WTC11 (cell line): ENCODE measurements at regions of chr10 and their contacts with region 1.

Region 1: DNA sequence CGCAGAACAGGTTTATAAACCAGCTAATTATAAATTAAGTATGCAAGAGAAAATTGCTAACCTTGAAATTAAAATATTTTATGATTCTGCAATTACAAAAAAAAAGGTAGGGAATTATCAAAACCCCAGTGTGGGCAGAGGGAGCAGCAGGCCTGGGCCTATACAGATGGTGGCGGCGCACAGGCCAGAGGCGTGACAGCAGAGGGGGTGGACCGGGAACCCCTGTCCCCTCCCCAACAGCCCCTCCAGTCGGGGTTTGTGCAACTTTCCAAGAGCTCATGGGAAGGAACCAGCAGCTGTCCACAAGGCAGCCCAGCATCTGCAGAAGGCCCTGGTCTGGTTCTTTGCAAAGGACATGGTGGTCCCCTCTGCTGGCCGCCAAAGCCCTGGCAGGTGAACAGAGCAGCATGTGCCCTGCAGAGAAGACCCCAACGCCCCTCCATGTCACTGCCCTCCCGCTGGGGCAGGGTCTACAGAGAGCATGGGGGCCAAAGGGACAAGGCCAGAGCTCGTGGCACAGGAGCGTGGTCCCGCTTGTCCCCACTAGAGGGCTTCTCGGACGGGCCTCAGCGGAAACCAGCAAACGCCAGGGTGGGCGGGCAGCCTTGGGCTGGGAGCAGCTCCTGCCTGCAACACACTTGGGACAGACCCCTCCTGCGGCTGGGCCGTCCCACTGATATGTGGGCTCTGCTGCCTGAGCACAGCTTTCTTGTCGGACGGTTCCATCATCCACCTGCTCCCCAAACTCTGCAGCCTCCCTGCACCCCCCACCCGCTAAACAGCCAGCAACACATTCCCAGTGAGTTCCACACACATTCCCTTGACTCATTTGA is 75.1 kb downstream of the EBF3 start:
- DNase-seq: peak; percentile 91
- ATAC-seq: peak; percentile 95
- H3K4me3 Mint-ChIP-seq: no peak overlapping the region
- H3K27ac Mint-ChIP-seq: no peak overlapping the region; the same call in 1 of the 2 replicates
- H3K4me1 Mint-ChIP-seq: peaks cover 47% of the 10 kb centered on the region
- H3K27me3 Mint-ChIP-seq: no peaks in the 10 kb centered on the region
- CTCF ChIP-seq: peak; percentile 83

Region 2: GRCh38 chr10:129718548-129719414 is 170.2 kb before region 1 on chr10:
- CTCF ChIA-PET with region 1: no interaction called
- POLR2A ChIA-PET with region 1: no interaction called
- DNase-seq: no peak
- ATAC-seq: no peak
- H3K4me3 Mint-ChIP-seq: no peak overlapping the region
- H3K27ac Mint-ChIP-seq: no peak overlapping the region; the same call in 1 of the 2 replicates
- H3K4me1 Mint-ChIP-seq: peaks cover 13% of the 10 kb centered on the region
- H3K27me3 Mint-ChIP-seq: no peaks in the 10 kb centered on the region
- CTCF ChIP-seq: no peak

Region 3: GRCh38 chr10:129742742-129743550 is 146.1 kb before region 1 on chr10:
- CTCF ChIA-PET with region 1: no interaction called
- POLR2A ChIA-PET with region 1: no interaction called
- DNase-seq: peak; percentile 6
- ATAC-seq: no peak
- H3K4me3 Mint-ChIP-seq: no peak overlapping the region
- H3K27ac Mint-ChIP-seq: no peak overlapping the region
- H3K4me1 Mint-ChIP-seq: 0 out of 2 replicates have a peak, but pooled peaks cover 2% of the 10 kb centered on the region
- H3K27me3 Mint-ChIP-seq: no peaks in the 10 kb centered on the region; the same call in 1 of the 2 replicates
- CTCF ChIP-seq: no peak

Region 4: DNA sequence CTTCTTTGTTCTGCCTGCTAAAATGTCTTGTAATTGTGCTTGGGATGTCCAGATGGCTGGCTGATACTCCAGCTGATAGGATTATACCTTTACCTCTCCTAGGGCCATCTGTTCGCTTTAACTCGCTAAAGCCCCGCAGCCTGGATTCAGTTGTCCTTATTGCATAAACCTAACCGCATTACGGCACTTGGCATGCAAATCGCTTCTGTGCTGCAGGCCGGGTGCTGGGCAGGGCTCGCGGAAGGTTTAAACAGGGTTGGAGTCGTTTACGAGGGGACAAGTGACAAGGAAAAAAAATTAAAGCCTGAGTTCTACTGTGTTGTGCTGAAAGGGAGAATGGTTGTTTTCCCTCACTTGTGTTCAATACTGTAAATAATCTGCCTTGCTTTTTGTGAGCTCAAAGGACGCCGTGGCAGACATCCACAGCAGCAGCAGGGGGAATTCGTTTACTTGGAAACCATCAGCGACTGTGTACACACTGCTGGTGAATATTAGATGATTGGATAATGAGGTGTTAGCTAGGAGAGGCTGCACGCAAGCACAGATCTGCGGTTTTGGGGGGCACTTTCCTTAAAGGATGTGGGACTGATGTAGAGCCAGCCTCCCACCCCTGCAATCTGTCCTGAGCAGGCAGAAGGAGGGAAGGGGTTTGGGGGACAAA is 17.9 kb before region 1 on chr10:
- CTCF ChIA-PET with region 1: interaction called, 79 read pairs
- POLR2A ChIA-PET with region 1: no interaction called
- DNase-seq: no peak
- ATAC-seq: no peak
- H3K4me3 Mint-ChIP-seq: no peak overlapping the region
- H3K27ac Mint-ChIP-seq: 0 out of 2 replicates have a peak overlapping the region, but pooled peaks have one; percentile 21
- H3K4me1 Mint-ChIP-seq: peaks cover 48% of the 10 kb centered on the region
- H3K27me3 Mint-ChIP-seq: no peaks in the 10 kb centered on the region
- CTCF ChIP-seq: no peak

Region 5: DNA sequence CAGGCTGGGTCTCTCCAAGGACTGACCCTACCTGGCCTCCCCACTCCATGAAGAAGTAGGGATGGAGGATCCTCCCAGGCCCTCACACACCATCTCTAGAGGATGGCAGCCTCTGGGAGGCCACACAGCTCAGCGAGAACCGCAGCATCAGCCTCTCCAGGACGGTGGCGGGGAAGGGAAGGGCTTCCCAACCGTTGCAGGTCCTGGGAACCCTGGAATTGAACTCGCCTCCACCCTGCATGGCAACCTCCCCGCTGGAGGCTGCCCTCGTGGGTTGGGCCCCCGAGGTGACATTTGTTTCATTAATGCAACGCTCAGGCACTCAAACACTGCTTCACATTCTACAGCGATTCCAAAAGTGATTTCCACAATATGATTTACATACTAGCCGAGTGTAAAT is 16.6 kb after region 1 on chr10:
- CTCF ChIA-PET with region 1: interaction called, 16 read pairs
- POLR2A ChIA-PET with region 1: no interaction called
- DNase-seq: no peak
- ATAC-seq: no peak
- H3K4me3 Mint-ChIP-seq: no peak overlapping the region
- H3K27ac Mint-ChIP-seq: no peak overlapping the region
- H3K4me1 Mint-ChIP-seq: peaks cover 20% of the 10 kb centered on the region
- H3K27me3 Mint-ChIP-seq: peaks cover 18% of the 10 kb centered on the region
- CTCF ChIP-seq: no peak

Region 6: DNA sequence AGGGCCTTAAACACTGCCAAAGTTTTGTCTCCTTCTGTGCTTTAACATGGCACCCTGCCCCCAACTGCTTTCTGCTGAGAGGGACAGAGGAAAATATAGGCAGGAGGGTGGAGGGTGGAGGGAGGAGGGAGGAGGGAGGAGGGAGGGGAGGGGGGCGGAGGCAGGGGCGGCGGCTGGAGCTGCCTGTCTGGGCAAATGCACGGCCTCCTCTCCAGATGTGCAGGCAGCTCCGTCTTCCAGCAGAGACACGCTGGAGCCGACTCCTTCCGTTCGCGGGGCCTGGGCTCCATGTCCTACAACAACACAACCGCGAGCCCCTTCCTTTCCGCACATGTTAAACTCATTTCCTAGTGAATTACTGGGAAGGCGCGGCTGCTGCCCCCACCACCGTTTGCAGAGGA is 60.9 kb after region 1 on chr10:
- CTCF ChIA-PET with region 1: interaction called, 19 read pairs
- POLR2A ChIA-PET with region 1: interaction called, 3 read pairs
- DNase-seq: peak; percentile 62
- ATAC-seq: peak; percentile 84
- H3K4me3 Mint-ChIP-seq: peak overlapping the region; percentile 62
- H3K27ac Mint-ChIP-seq: no peak overlapping the region
- H3K4me1 Mint-ChIP-seq: peaks cover 38% of the 10 kb centered on the region
- H3K27me3 Mint-ChIP-seq: peaks cover 36% of the 10 kb centered on the region
- CTCF ChIP-seq: no peak

Region 7: DNA sequence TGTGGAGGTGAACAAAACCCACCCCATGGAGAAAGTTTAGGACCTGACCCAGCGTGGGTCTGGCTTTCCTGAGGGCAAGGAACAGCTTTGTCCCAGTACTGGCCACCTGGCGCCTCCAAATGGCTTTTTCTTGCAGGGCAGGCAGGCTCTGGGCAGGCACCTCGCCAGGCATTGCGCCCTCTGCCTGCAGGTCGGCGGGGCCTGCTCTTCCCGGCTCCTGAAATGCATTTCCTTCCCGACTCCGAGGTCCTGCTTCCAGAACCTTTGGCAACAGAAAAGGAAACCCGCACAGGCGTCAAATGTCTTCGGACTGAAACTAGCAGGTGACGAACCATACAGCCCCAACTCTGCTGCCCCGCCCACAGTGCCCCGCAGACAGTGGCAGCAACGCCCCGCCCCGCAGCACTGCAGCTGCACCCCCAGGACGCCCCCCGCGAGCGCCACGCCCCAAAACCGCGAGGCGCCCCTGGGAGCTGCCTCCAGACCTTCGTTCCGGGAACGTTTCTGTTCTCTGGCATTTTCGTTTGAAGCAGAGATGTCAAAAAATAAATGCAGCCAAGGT is 156.2 kb after region 1 on chr10:
- CTCF ChIA-PET with region 1: interaction called, 10 read pairs
- POLR2A ChIA-PET with region 1: no interaction called
- DNase-seq: peak; percentile 78
- ATAC-seq: peak; percentile 86
- H3K4me3 Mint-ChIP-seq: no peak overlapping the region
- H3K27ac Mint-ChIP-seq: no peak overlapping the region
- H3K4me1 Mint-ChIP-seq: peaks cover 22% of the 10 kb centered on the region
- H3K27me3 Mint-ChIP-seq: no peaks in the 10 kb centered on the region
- CTCF ChIP-seq: peak; percentile 39; the same call in 1 of the 2 replicates

Region 8: GRCh38 chr10:130232166-130233034 is 343.4 kb after region 1 on chr10:
- CTCF ChIA-PET with region 1: no interaction called
- POLR2A ChIA-PET with region 1: no interaction called
- DNase-seq: no peak
- ATAC-seq: no peak
- H3K4me3 Mint-ChIP-seq: no peak overlapping the region
- H3K27ac Mint-ChIP-seq: no peak overlapping the region
- H3K4me1 Mint-ChIP-seq: no peaks in the 10 kb centered on the region
- H3K27me3 Mint-ChIP-seq: peaks cover 15% of the 10 kb centered on the region
- CTCF ChIP-seq: no peak